ENCODE measurements at regions of chr18 and their contacts with region 1.

Region 1: DNA sequence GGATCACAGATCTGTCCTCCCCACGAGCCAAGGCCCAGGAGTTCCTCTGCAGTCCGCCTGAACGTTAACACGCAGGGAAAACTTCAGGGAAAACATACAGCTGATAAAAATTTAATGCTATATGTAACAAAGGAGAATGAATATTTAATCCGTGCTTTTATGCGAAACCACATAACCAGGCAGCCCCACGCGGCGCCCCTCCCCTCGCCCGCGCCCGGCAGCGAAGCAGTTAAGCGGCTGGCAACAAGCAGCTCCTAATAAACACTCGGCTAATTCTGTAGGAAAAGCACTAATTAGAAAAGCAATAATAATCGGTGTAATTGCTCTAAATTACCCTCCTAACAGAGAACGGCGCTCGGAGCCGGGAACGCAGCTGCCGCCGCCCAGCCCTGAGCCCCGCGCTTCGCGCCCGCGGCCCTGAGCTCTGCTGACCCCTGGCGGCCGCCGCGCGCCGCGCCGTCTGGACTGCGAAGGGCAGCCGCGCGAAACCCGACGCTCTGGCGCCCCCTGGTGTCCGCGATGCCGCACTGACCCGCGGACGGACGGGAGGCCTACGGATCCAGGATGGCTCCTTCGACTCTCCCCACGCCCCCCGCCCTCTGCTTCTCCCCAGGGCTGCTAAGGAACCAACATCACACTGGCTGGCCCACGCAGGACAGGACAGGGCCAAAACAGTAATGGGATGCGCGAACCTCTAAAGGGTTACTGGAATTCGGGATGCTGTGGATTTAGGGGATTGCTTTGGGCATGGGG is 181.4 kb downstream of the SMAD2 start:
- DNase-seq: peak; percentile 75 to 87 (median 81)
- H3K4me3 ChIP-seq: peak overlapping the region in 6 of 7 experiments; percentile 3 to 53 (median 40)
- H3K27ac ChIP-seq: no peak overlapping the region
- H3K4me1 ChIP-seq: peaks cover 0 to 4% (median 2%) of the 10 kb centered on the region in 4 experiments
- H3K27me3 ChIP-seq: peaks cover 0 to 18% (median 7%) of the 10 kb centered on the region in 5 experiments

Region 2: DNA sequence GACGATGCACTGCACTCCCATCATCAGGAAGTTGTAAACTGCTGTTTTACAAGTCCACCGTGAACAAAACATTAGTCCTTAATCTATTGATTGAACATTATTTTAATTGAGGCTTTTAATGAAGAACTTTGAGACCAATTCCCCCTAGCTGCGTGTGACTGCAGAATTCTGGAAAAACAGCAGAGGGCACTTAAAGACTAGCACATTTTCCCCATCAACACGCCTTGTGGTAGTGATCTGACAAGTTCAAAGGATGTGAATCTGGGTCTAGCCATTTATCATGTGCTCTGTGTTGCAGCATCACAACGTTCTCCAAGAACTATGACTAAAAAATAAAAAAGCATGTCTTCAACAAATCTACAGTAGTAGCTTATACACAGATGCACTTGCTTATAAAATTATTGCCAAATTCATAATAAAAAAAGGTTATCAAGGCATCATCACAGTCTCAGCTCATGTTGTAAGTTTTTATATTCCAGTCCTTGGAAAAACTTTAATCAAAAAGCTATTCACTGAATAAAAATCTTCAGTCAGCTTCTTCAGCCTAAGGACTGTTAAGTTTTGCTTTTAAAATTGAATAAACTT is 533.4 kb before region 1 on chr18:
- CTCF ChIA-PET with region 1: interaction called, 32 read pairs
- POLR2A ChIA-PET with region 1: no interaction called
- DNase-seq: peak; percentile 55 to 82 (median 79)
- H3K4me3 ChIP-seq: no peak overlapping the region
- H3K27ac ChIP-seq: no peak overlapping the region
- H3K4me1 ChIP-seq: no peaks in the 10 kb centered on the region
- H3K27me3 ChIP-seq: peaks cover 11 to 48% (median 31%) of the 10 kb centered on the region in 5 experiments

Region 3: GRCh38 chr18:47737956-47738355 is 11.1 kb before region 1 on chr18:
- CTCF ChIA-PET with region 1: interaction called, 10 read pairs
- POLR2A ChIA-PET with region 1: no interaction called
- DNase-seq: no peak
- H3K4me3 ChIP-seq: no peak overlapping the region
- H3K27ac ChIP-seq: no peak overlapping the region
- H3K4me1 ChIP-seq: no peaks in the 10 kb centered on the region
- H3K27me3 ChIP-seq: peaks cover 0 to 39% (median 7%) of the 10 kb centered on the region in 5 experiments

Region 4: DNA sequence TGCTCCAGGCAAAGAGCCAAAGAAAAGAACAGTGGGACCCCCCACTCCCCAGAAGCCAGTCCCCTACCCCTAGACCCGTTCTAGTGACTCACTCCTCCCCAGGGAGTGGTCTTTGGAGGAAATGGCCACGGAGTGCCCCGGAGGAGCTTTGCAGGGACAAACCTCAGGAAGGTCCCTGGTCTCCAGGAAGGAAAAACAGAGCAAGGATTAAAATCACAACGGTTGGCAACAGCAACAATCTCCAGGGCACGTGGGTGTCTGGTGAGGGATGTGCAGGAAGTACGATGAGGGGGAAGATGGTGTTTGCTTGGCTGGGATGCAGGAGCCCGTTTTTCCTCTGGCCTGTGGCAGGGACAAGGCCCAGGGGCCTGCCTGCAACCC is 46.4 kb after region 1 on chr18:
- CTCF ChIA-PET with region 1: no interaction called
- POLR2A ChIA-PET with region 1: no interaction called
- DNase-seq: no peak
- H3K4me3 ChIP-seq: no peak overlapping the region
- H3K27ac ChIP-seq: no peak overlapping the region
- H3K4me1 ChIP-seq: peaks cover 0 to 4% (median 0%) of the 10 kb centered on the region in 4 experiments
- H3K27me3 ChIP-seq: peaks cover 0 to 10% (median 1%) of the 10 kb centered on the region in 5 experiments